ENCODE measurements at regions of chr3 and their contacts with region 1.

Region 1: GRCh38 chr3:48739955-48740823 is 23.2 kb upstream of the IP6K2 start:
- DNase-seq: peak; percentile 41 to 87
- H3K4me3 ChIP-seq: no peak overlapping the region
- H3K27ac ChIP-seq: no peak overlapping the region
- H3K4me1 ChIP-seq: peaks cover 0 to 4% (median 0%) of the 10 kb centered on the region in 4 experiments; a peak in 2 of 7 replicates
- H3K27me3 ChIP-seq: no peaks in the 10 kb centered on the region; a peak in 1 of 7 replicates
- CTCF ChIP-seq: peak; percentile 75 to 95 (median 91)
- EP300 ChIP-seq: no peak
- POLR2A ChIP-seq: no peak
- RAD21 ChIP-seq: peak; percentile 59 to 70

Region 2: GRCh38 chr3:48464713-48465221 is 275.4 kb before region 1 on chr3:
- CTCF ChIA-PET with region 1: no interaction called
- POLR2A ChIA-PET with region 1: no interaction called
- DNase-seq: no peak
- H3K4me3 ChIP-seq: no peak overlapping the region
- H3K27ac ChIP-seq: peak overlapping the region; percentile 31; the same call in 1 of the 2 replicates
- H3K4me1 ChIP-seq: peaks cover 0 to 25% (median 13%) of the 10 kb centered on the region in 4 experiments; a peak in 5 of 7 replicates
- H3K27me3 ChIP-seq: no peaks in the 10 kb centered on the region
- CTCF ChIP-seq: no peak
- EP300 ChIP-seq: no peak
- POLR2A ChIP-seq: no peak
- RAD21 ChIP-seq: no peak

Region 3: DNA sequence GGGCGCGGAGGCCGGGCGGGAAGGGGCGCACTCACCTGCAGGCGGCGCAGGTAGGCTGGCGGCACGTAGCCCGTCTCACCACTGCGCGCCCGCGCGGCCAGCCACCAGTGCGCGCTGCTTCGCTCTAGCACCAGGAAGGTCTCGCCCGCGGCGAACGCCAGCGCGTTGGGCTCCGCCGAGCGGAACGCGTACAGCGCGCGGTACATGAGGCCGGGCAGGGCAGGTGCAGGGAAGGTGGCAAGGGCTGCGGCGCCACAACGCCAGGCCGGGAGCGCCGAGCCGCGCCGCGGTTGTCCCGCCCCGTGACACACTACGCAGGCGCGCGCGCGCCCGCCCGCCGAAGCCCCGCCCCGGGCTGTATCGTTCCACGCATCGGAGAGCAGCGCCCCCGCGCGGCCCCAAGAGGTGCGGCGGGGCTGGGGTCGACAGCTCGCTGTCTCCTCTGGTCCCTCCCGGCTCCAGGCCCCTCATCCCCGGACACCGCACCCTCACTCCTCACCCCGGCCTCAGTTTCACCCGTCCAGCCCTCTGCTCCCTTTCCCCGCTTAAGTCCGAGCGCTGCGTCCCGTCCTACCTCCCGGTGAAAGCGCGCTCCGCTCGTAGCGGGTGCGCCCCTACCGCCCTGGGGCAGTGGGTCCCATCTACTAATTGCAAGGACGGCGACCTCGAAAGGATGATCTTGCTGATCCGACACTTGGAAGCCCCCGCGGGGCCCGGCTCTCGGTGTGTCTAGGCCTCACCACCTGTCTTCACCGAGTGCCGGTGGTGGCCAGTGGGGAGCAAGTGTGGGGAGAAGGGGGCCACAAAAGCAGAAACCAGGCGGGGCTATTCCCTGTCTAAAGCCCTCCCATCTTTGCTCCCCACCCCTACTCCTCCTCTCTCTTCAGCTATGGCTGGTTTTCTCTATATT is 54.3 kb before region 1 on chr3 and contains the start of gene NCKIPSD:
- CTCF ChIA-PET with region 1: interaction called, 13 read pairs
- POLR2A ChIA-PET with region 1: no interaction called
- DNase-seq: peak in 1 of 2 experiments; percentile 98
- H3K4me3 ChIP-seq: peak within 1 kb of the TSS; percentile 81 to 94 (median 86)
- H3K27ac ChIP-seq: peak within 1 kb of the TSS; percentile 94
- H3K4me1 ChIP-seq: peaks cover 0 to 11% (median 4%) of the 10 kb centered on the region in 4 experiments; a peak in 3 of 7 replicates
- H3K27me3 ChIP-seq: no peaks in the 10 kb centered on the region
- CTCF ChIP-seq: peak in 2 of 3 experiments; percentile 77 to 90; a peak in 3 of 4 replicates
- EP300 ChIP-seq: no peak
- POLR2A ChIP-seq: peak in 1 of 2 experiments; percentile 86; a peak in 2 of 3 replicates
- RAD21 ChIP-seq: peak; percentile 49 to 62
- total RNA-seq, gene NCKIPSD: 31.7 and 34.7 TPM in 2 replicates

Region 4: GRCh38 chr3:48716982-48717746 is 23.0 kb before region 1 on chr3 and contains the start of gene IP6K2:
- CTCF ChIA-PET with region 1: interaction called, 14 read pairs
- POLR2A ChIA-PET with region 1: interaction called, 26 read pairs
- DNase-seq: peak; percentile 97 to 100
- H3K4me3 ChIP-seq: peak within 1 kb of the TSS; percentile 94 to 100 (median 97)
- H3K27ac ChIP-seq: peak within 1 kb of the TSS; percentile 98
- H3K4me1 ChIP-seq: peaks cover 0 to 11% (median 3%) of the 10 kb centered on the region in 4 experiments; a peak in 5 of 7 replicates
- H3K27me3 ChIP-seq: no peaks in the 10 kb centered on the region
- CTCF ChIP-seq: no peak
- EP300 ChIP-seq: no peak
- POLR2A ChIP-seq: peak; percentile 89
- RAD21 ChIP-seq: no peak
- total RNA-seq, gene IP6K2: 89.4 and 95.8 TPM in 2 replicates

Region 5: DNA sequence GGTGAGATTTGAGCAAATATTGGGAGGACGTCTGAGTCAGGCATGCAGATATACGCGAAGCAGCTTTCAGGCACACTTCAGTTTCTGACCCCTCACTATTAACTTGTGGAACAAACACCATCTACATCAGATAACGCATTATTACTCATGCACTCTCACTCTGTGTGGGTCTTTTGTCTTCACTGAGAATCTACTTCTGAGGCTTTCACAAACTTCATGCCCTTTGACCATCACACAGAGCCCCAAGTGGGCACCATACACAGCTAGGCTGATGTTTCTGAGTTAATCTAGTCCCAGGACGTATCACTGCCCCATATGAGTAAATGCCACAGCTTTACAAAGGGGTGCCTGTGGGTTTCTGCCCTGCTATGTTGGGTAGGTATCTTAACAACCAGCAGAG is 16.5 kb after region 1 on chr3:
- CTCF ChIA-PET with region 1: interaction called, 75 read pairs
- POLR2A ChIA-PET with region 1: interaction called, 4 read pairs
- DNase-seq: no peak
- H3K4me3 ChIP-seq: no peak overlapping the region
- H3K27ac ChIP-seq: no peak overlapping the region
- H3K4me1 ChIP-seq: no peaks in the 10 kb centered on the region
- H3K27me3 ChIP-seq: no peaks in the 10 kb centered on the region
- CTCF ChIP-seq: no peak
- EP300 ChIP-seq: no peak
- POLR2A ChIP-seq: no peak
- RAD21 ChIP-seq: no peak

Region 6: GRCh38 chr3:48855681-48856447 is 115.7 kb after region 1 on chr3:
- CTCF ChIA-PET with region 1: interaction called, 11 read pairs
- POLR2A ChIA-PET with region 1: no interaction called
- DNase-seq: no peak
- H3K4me3 ChIP-seq: no peak overlapping the region
- H3K27ac ChIP-seq: no peak overlapping the region
- H3K4me1 ChIP-seq: no peaks in the 10 kb centered on the region; a peak in 1 of 7 replicates
- H3K27me3 ChIP-seq: no peaks in the 10 kb centered on the region; a peak in 1 of 7 replicates
- CTCF ChIP-seq: no peak
- EP300 ChIP-seq: no peak
- POLR2A ChIP-seq: no peak
- RAD21 ChIP-seq: no peak; a peak in 1 of 4 replicates

Region 7: DNA sequence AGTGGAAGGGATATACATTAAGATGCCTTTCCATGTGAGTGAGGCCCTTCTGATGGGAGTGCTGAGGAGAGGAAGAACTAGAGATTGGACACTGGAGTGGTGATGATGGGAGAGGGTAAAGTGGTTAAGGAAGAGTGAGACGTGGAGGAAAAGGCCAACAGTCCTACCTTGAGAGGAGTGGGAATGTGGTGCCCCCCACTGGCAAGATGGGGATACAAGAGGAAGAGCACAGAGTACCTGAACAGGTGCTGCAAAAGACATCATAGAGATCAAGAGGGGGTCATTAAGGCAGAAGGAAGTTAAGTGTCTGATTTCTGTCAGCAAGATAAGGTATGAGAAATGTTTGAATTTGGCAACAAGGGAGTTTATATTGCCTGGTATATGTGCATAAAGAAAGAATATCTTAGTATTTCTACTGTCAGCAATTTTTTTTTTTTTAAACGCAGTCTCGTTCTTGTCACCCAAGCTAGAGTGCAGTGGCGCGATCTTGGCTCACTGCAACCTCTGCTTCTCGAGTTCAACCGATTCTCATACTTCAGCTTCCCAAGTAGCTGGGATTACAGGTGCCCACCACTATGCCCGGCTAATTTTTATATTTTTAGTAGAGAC is 212.4 kb after region 1 on chr3:
- CTCF ChIA-PET with region 1: interaction called, 53 read pairs
- POLR2A ChIA-PET with region 1: no interaction called
- DNase-seq: peak; percentile 7 to 79
- H3K4me3 ChIP-seq: no peak overlapping the region
- H3K27ac ChIP-seq: no peak overlapping the region
- H3K4me1 ChIP-seq: peaks cover 0 to 7% (median 0%) of the 10 kb centered on the region in 4 experiments; a peak in 2 of 7 replicates
- H3K27me3 ChIP-seq: no peaks in the 10 kb centered on the region
- CTCF ChIP-seq: peak; percentile 62 to 91 (median 78)
- EP300 ChIP-seq: no peak
- POLR2A ChIP-seq: no peak
- RAD21 ChIP-seq: peak; percentile 83